ENCODE measurements at regions of chr10 and their contacts with region 1.

Region 1: GRCh38 chr10:71985542-71986250 is 21.5 kb downstream of the CHST3 start:
- DNase-seq: no peak
- ATAC-seq: no peak
- H3K4me3 ChIP-seq: no peak overlapping the region
- H3K27ac ChIP-seq: no peak overlapping the region
- H3K4me1 ChIP-seq: peaks cover 5 to 7% of the 10 kb centered on the region in 2 experiments; a peak in 4 of 5 replicates
- H3K27me3 ChIP-seq: peaks cover 43 to 57% of the 10 kb centered on the region in 2 experiments
- CTCF ChIP-seq: no peak
- EP300 ChIP-seq: no peak
- POLR2A ChIP-seq: no peak
- RAD21 ChIP-seq: no peak

Region 2: GRCh38 chr10:71999360-72000072 is 13.8 kb after region 1 on chr10:
- CTCF ChIA-PET with region 1: no interaction called
- POLR2A ChIA-PET with region 1: interaction called, 10 read pairs
- in situ Hi-C with region 1: no loop called
- intact Hi-C with region 1: no loop called
- DNase-seq: peak in 1 of 4 experiments; percentile 41
- ATAC-seq: peak; percentile 80
- H3K4me3 ChIP-seq: no peak overlapping the region
- H3K27ac ChIP-seq: no peak overlapping the region
- H3K4me1 ChIP-seq: peaks cover 10 to 13% of the 10 kb centered on the region in 2 experiments; a peak in 3 of 5 replicates
- H3K27me3 ChIP-seq: peaks cover 10 to 28% of the 10 kb centered on the region in 2 experiments
- CTCF ChIP-seq: no peak
- EP300 ChIP-seq: no peak
- POLR2A ChIP-seq: no peak
- RAD21 ChIP-seq: no peak

Measured in K562 (cell line).